Sciatic nerve (tissue), 2 donors: ENCODE measurements at regions of chr16 and their contacts with region 1.

Region 1: DNA sequence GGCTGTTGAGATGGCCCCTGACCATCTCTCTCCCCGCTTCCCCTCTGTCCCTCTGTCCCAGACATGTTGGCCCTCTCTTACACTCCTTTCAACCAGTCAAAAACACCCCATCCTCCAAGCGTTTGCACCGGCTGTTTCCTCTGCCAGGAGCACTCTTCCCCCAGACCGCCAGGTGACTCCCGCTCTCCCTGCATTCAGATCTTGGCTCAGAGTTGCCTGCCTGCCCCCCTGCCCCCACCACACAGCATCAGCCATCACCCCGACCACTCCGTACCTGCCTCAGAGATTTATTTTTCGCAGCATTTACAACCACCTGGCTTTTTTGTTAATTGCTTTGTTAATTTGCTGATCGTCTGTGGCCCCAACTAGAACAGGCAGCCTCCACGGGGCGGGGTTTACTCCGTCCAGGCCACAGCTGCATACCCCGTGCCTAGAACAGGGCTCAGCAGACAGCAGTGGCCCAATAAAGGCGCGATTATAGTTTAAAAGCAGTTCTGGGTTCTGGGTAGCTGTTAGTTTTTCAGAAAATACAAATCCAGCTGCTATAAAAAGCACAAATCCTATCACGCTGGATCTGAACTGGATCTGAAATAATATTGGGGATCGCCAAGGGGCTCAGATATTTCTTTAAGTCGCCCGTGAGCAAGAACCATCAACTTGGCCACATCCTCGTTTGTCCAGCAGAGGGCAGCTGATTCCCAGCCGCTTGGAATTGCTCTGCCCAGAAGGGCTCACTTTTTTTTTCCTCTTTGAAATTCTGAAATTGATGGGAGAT is 173.6 kb downstream of the IRF8 start:
- DNase-seq: peak; percentile 83
- ATAC-seq: peak; percentile 67

Region 2: GRCh38 chr16:86029131-86029741 is 43.3 kb before region 1 on chr16:
- intact Hi-C with region 1: no loop called
- DNase-seq: peak; percentile 54
- ATAC-seq: peak; percentile 35

Region 3: DNA sequence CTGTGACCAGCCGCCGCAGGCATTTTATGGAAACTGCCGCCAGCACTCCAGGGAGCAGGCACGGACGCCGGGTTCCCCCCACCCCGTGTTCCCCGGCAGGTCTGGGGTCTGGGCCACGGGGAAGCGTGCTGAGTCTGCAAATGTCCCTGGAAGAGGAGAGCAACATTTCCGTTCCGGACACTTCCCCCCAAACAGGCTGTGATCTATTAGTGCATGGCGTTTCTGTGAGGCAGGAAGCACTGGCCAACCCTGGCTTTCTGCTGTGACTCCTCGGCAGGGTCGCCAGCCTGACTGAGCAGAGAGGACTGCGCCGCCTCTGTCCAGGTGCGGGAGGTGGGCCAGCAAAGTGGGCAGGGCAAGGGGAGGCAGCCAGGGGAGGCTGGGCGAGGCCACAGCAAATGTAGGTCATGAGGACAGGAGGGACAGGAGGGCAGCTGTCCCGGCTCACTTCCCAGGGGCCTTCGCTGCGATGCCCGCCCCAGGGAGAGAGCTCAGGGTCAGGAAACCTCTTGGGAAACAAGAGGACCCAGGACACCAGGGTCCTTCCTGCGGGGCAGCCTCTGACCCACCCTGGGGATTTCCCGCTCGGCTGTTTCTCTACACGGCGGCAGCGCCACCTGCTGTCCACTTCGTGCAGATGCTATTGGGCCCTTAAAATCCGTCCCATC is 447.3 kb after region 1 on chr16:
- intact Hi-C with region 1: loop called (anchors 5 kb)
- DNase-seq: peak; percentile 77
- ATAC-seq: peak; percentile 63